ENCODE measurements at regions of chr9 and their contacts with region 1.

Region 1: GRCh38 chr9:110152704-110153374 is 55.1 kb downstream of the C9orf152 start:
- DNase-seq: peak; percentile 84
- H3K4me3 ChIP-seq: no peak overlapping the region
- H3K27ac ChIP-seq: peak overlapping the region; percentile 36
- H3K4me1 ChIP-seq: peaks cover 13% of the 10 kb centered on the region
- H3K27me3 ChIP-seq: no peaks in the 10 kb centered on the region
- CTCF ChIP-seq: peak; percentile 63 to 65
- POLR2A ChIP-seq: no peak

Region 2: GRCh38 chr9:109779711-109780452 is 373.0 kb before region 1 on chr9 and contains the start of gene PALM2AKAP2:
- CTCF ChIA-PET with region 1: no interaction called
- POLR2A ChIA-PET with region 1: no interaction called
- dilution Hi-C with region 1: no loop called
- intact Hi-C with region 1: no loop called
- DNase-seq: no peak
- H3K4me3 ChIP-seq: peak within 1 kb of the TSS in 1 of 3 experiments; percentile 12
- H3K27ac ChIP-seq: no peak within 1 kb of the TSS
- H3K4me1 ChIP-seq: no peaks in the 10 kb centered on the region
- H3K27me3 ChIP-seq: peaks cover 22 to 23% of the 10 kb centered on the region in 2 experiments
- CTCF ChIP-seq: no peak
- POLR2A ChIP-seq: no peak
- total RNA-seq, gene PALM2AKAP2: not detected in 2 replicates

Region 3: DNA sequence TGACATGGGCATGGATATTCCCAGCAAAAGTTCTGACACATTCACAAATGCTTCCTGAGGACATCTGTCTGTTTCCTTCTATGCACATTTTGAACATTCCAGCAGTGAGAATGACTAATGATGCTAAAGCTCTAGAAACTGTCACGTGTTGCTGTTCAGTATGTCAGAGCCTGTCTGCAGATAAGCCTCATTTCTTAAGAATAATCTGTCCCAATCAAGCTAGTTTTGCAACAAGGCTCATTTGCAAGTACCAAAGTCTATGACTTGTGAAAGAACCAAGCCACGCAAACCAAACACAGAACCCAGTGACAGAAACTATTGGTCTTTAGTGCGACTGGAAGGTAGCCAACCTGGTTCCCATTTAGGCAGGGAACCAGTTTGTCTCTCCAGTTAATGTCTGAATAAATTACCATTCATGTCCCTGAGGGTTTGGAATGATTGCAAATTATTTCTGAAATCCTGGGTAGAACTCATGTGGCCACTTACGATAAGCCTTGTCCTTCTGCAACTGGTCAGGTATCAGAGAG is 123.3 kb before region 1 on chr9:
- CTCF ChIA-PET with region 1: interaction called, 4 read pairs
- POLR2A ChIA-PET with region 1: interaction called, 3 read pairs
- dilution Hi-C with region 1: no loop called
- intact Hi-C with region 1: loop called (anchors 1 kb)
- DNase-seq: peak; percentile 91
- H3K4me3 ChIP-seq: peak overlapping the region in 1 of 3 experiments; percentile 1
- H3K27ac ChIP-seq: peak overlapping the region; percentile 97
- H3K4me1 ChIP-seq: peaks cover 57% of the 10 kb centered on the region
- H3K27me3 ChIP-seq: no peaks in the 10 kb centered on the region
- CTCF ChIP-seq: no peak
- POLR2A ChIP-seq: peak; percentile 63

Region 4: GRCh38 chr9:110048403-110048975 is 104.3 kb before region 1 on chr9:
- CTCF ChIA-PET with region 1: interaction called, 6 read pairs
- POLR2A ChIA-PET with region 1: no interaction called
- dilution Hi-C with region 1: no loop called
- intact Hi-C with region 1: loop called (anchors 2 kb)
- DNase-seq: peak; percentile 88
- H3K4me3 ChIP-seq: peak overlapping the region; percentile 99 to 100 (median 100)
- H3K27ac ChIP-seq: peak overlapping the region; percentile 98
- H3K4me1 ChIP-seq: peaks cover 28% of the 10 kb centered on the region
- H3K27me3 ChIP-seq: no peaks in the 10 kb centered on the region
- CTCF ChIP-seq: no peak
- POLR2A ChIP-seq: peak; percentile 96

Region 5: GRCh38 chr9:110058304-110058953 is 94.4 kb before region 1 on chr9:
- CTCF ChIA-PET with region 1: no interaction called
- POLR2A ChIA-PET with region 1: no interaction called
- dilution Hi-C with region 1: no loop called
- intact Hi-C with region 1: loop called (anchors 1 kb)
- DNase-seq: peak; percentile 82
- H3K4me3 ChIP-seq: no peak overlapping the region
- H3K27ac ChIP-seq: peak overlapping the region; percentile 30
- H3K4me1 ChIP-seq: peaks cover 30% of the 10 kb centered on the region
- H3K27me3 ChIP-seq: no peaks in the 10 kb centered on the region
- CTCF ChIP-seq: peak; percentile 37 to 46
- POLR2A ChIP-seq: peak; percentile 31

Region 6: DNA sequence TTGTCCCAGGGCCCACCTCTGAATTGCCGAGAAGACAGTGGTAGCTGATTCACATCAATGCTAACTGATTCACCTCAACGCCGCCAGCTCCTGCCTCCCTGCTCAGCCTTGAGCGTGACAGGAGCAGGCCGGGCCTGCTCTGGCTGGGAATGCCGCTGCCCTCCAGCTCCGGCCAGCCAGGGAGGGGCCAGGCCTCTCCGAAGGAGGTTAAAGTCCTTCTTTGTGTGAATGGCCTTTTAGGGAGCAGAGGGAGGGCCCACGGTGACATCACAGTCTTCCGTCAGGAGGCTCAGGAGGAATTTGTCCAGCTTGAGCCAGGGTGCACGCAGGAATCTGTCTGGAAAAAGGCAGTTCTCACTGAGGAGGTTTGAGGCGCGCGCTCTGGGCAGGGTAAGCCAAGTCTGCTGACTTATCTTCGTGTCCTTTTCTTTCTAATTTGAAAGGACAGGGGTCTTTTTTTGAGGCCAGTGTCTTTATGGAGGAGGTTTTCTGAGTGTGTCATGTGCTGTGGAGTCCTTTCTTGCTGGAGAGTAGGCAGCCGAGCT is 27.6 kb before region 1 on chr9:
- CTCF ChIA-PET with region 1: interaction called, 20 read pairs
- POLR2A ChIA-PET with region 1: no interaction called
- dilution Hi-C with region 1: no loop called
- intact Hi-C with region 1: no loop called
- DNase-seq: peak; percentile 81
- H3K4me3 ChIP-seq: no peak overlapping the region
- H3K27ac ChIP-seq: peak overlapping the region; percentile 79
- H3K4me1 ChIP-seq: peaks cover 60% of the 10 kb centered on the region
- H3K27me3 ChIP-seq: no peaks in the 10 kb centered on the region
- CTCF ChIP-seq: no peak
- POLR2A ChIP-seq: no peak